Cardiac septum (tissue), 1 donor: ENCODE measurements at regions of chr18 and their contacts with region 1.

Region 1: DNA sequence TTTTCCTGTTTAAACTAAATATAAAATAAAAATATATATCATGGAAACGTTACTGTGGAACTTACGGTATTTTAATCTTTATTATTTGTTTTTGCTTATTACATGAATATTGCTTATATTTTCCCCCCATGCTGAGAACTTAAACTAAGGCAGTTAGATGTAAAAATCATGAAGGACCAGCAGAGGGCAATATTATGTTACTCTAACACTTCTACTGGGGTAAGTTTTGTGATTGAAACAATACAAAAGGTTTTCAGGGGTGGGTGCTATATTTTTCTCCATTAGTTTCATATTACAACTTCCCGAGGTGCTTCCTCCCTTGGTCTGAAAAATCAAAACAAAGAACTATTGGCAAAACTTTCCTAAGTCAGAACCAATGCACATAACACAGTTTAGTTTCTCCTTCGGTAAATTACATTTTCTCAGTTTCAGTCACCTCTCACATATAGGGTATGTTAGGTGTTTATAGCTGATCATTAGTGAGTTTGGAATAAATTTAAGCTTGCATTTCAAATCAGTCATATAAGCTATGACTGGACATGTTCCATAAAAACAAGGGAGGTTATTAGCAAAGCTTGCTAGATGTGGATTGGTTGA is 54.8 kb downstream of the ZNF407 start:
- DNase-seq: no peak

Region 2: DNA sequence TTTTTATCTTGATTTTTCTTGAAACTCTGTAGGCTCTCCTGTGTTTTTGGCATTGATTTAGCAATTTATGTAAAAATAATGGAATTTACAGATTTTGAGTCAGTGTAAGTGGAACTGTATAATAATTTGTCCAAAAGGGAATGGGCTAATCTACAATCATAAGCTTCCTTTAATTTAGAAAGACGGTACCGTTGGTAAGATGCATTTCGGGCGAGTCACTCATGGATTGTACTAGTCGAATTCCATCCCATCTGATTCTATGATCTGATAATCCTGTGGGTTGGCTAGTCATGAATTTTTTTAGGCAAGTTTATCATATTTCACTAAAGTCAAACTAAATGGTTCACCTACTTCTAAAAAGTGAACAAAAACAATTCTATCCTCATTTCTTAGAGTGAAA is 78.6 kb after region 1 on chr18:
- intact Hi-C with region 1: no loop called
- DNase-seq: no peak

Region 3: DNA sequence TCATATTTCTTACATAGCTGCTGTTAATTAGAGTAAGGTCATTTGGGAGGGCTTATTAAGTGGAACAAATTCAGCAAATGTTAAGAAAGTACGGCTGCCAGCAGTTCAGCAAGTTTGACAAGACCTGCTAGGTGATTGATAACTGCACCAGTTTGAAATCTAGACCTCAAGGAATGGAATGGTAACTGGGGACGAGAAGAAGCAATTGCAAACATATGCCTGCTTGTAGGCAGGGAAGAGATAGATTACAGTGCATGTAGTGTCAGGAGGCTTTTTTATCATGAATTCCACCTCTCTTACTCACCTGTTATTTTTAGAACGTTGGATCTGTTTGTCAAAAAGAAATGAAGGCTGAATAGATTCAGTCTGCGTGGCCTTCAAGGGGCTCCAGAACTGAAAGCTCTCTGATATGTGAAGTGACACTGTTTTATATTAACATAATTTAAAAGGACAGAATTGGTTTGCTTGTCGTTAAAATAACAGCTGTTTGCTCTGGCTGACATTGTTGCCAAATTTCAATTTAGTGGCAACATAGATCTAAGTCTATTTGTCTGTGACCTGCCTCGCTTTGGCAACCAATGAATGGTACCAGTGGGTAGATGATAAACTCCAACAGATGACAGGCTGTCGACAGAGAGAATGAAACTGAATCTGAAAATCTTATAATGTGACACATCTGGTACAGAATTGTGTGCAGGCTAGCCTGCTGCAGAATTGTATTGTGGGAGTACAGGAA is 144.5 kb after region 1 on chr18:
- intact Hi-C with region 1: no loop called
- DNase-seq: no peak

Region 4: GRCh38 chr18:75478996-75479880 is 826.7 kb after region 1 on chr18:
- intact Hi-C with region 1: loop called (anchors 5 kb)
- DNase-seq: no peak

Region 5: GRCh38 chr18:75727456-75727855 is 1075.0 kb after region 1 on chr18:
- intact Hi-C with region 1: loop called (anchors 5 kb)
- DNase-seq: no peak

Region 6: DNA sequence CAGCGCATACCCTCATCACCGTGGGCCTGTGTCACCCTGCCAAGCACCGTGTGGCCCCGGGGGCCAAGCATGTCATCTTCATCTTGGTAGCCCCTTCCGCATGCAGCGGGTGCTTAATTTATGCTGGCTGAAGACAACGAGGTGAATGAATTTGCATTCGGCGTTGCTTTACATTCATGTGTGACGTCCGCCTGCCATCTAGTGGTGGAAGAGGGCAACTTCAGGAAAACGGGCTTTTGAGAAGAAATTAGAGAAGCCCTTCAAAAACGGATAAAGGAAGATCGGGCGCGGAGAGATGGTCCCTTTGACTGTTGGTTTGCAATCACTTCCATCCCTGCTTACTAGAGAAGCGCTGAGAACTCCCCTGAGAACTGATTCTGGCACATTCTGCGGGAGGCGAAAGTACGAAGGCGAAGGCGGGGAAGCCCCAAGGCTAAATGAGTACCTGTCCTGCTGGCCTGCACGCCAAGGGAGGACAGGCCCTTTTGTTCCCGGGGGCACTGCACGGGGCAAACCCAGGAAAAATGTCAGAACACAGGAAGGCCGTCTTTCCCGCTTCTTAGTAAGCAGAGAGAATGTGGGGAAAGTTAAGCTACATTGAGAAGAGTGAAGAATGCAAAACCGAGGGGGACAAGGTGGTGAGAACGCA is 1696.7 kb after region 1 on chr18:
- intact Hi-C with region 1: loop called (anchors 5 kb)
- DNase-seq: no peak